Activated CD4-positive, alpha-beta memory T cell treated with anti-CD3 and anti-CD28 coated beads for 36 hours (primary cell): ENCODE measurements at regions of chr10 and their contacts with region 1.

Region 1: DNA sequence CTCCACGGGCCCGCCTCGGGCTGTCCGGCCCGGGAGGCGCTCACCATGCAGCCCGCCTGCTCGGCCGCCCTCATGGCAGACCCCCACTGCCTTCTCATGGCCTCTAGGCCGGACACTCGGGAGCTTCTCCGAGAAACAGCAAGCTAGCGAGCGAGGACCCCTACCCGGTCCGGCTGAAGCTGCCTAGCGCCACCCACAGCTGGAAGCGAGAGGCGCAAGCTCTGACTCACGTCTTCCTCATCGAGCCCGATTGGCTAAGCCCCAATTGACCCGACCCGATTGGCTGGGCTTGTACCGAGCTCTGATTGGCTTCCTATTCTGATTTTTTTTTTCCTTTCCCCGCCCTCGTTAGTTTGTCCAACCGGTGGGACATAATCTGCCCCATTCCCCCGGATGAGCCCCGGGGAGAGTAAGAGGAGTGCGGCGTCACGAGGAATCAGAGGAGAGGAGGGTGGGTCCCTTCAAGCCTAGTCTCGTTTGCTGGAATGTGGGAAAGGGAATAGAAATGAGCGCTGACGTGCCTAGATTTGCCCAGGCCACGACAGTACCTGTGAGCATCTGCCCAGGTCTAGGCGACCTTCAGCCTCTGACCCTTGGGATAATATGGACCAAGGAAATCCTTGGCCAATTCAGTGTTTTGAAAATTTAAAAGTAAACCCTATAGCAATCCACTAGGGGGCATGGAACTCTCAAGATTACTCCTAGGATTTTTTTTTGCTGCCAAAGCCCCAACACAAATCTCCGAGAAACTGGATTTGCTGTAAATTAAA is at the start of gene TYSND1:
- DNase-seq: peak; percentile 96
- H3K4me3 Mint-ChIP-seq: peak within 1 kb of the TSS; percentile 89
- H3K27ac Mint-ChIP-seq: peak within 1 kb of the TSS; percentile 90
- H3K4me1 Mint-ChIP-seq: peaks cover 21% of the 10 kb centered on the region
- H3K27me3 Mint-ChIP-seq: no peaks in the 10 kb centered on the region
- total RNA-seq, gene TYSND1: 10.9 to 12.1 TPM

Region 2: DNA sequence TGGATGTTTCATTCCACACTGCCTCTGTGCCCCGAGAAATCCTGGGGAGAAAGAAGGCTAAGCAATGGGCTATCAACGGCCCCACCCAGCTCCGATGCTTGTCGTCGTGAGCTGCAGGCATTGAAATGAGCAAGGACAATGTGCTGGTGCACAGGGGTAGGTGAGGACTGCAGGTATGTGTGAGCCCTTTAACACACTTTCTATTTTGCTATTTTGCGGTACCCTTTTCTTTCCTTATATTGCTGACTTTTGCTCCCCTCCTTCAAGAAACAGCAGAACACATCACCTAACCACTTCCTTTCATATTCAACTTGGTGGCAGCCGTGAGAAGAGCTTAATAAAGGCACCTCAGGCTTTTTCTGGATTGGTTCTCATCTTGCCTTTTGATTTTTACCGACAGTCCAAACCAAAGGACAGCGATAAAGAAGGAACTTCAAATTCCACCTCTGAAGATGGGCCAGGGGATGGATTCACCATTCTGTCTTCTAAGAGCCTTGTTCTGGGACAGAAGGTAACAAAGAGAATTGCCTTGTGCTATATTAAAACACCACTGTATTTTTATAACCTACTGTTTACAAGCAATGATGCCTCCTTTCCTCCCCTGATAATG is 53.2 kb before region 1 on chr10:
- CTCF ChIA-PET with region 1: interaction called, 30 read pairs
- POLR2A ChIA-PET with region 1: interaction called, 3 read pairs
- intact Hi-C with region 1: loop called (anchors 1 kb)
- DNase-seq: peak; percentile 51
- H3K4me3 Mint-ChIP-seq: peak overlapping the region; percentile 58
- H3K27ac Mint-ChIP-seq: peak overlapping the region; percentile 7
- H3K4me1 Mint-ChIP-seq: peaks cover 34% of the 10 kb centered on the region
- H3K27me3 Mint-ChIP-seq: no peaks in the 10 kb centered on the region

Region 3: DNA sequence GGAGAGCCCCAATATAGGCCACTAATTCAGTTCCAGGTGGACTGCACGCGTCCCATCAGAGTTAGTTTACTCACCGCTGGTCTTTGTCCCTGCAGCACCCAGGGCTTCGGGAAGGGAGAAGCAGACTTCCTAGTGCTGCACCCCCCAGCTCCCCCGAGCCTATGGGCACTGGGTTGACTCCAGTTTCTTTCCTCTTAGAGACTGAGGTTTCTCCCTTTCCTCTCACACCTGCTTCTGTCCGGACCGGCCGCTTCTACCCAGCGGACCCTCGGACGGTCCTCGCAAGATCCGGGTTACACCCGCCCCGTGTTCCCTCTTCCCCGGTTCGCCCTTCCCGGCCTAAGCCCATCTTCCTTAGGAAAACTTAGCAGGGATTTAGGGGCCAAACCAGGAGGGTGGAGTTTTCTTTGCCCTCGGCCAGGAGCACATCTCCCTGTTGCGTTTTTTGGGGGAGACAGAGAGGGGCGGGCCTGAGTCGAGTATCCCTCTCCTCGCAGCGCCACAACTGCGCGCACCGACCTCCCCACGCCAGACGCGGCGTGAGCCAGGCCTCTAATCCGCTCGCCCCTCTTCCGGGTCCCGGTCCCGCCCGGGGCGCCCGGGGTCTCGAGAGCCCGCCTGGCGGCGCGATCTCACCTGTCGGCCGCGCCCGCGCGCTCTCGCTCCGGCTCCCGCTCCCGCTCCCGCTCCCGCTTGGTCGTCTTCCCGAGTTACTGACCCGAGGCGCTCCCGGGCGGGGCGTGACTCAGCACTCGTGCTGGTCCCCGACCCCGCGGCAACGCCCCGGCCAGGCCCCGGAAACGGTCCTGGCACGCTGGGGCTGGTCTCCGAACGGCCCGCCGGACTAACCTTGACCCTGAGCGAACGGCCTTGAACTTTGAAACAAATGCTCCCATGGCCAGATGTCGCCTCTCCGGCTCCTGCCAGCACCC is 14.3 kb before region 1 on chr10 and contains the start of gene AIFM2:
- CTCF ChIA-PET with region 1: interaction called, 16 read pairs
- POLR2A ChIA-PET with region 1: interaction called, 6 read pairs
- intact Hi-C with region 1: no loop called
- DNase-seq: peak; percentile 54
- H3K4me3 Mint-ChIP-seq: peak within 1 kb of the TSS; percentile 77
- H3K27ac Mint-ChIP-seq: no peak within 1 kb of the TSS
- H3K4me1 Mint-ChIP-seq: peaks cover 17% of the 10 kb centered on the region
- H3K27me3 Mint-ChIP-seq: no peaks in the 10 kb centered on the region
- total RNA-seq, gene AIFM2: 5.3 to 7.1 TPM

Region 4: DNA sequence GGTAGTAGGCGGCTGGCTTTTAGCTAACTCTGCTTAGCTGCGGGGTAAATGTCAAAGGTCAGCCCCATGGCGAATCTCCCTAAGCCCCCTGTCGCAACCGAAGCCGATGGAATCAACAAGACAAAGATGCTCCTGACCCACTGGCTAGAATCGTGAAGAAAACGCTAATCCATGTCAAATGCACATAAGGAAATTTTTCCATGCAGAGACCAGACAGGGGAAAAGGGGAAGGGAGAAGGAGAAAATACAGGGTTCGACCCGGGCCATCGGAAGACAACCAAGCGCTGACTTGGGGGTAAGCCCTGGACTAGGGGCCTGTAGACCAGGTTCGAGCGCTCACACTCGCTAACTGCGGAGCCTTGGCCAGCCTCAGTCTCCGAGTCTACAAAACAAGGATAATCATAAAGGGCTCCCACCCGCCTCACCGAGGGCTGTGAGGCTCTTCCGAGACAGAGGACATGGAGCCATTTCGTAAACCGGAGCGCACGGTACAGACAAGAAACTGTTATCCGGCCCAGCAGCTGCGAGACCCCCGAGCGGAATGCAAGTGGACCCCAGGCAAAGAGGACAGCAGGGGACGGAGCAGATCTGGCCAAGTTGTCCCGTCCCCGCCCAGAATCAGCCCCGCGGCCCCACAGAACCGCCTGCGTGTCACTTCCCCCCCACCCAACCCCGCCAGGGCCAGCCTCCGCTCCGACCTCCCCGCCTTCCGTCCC is 23.1 kb after region 1 on chr10:
- CTCF ChIA-PET with region 1: interaction called, 55 read pairs
- POLR2A ChIA-PET with region 1: interaction called, 50 read pairs
- intact Hi-C with region 1: loop called (anchors 1 kb)
- DNase-seq: peak; percentile 15
- H3K4me3 Mint-ChIP-seq: peak overlapping the region; percentile 93
- H3K27ac Mint-ChIP-seq: peak overlapping the region; percentile 94
- H3K4me1 Mint-ChIP-seq: peaks cover 68% of the 10 kb centered on the region
- H3K27me3 Mint-ChIP-seq: no peaks in the 10 kb centered on the region

Region 5: GRCh38 chr10:70221030-70221429 is 74.4 kb after region 1 on chr10:
- CTCF ChIA-PET with region 1: interaction called, 20 read pairs
- POLR2A ChIA-PET with region 1: no interaction called
- intact Hi-C with region 1: no loop called
- DNase-seq: no peak
- H3K4me3 Mint-ChIP-seq: no peak overlapping the region
- H3K27ac Mint-ChIP-seq: no peak overlapping the region
- H3K4me1 Mint-ChIP-seq: peaks cover 37% of the 10 kb centered on the region
- H3K27me3 Mint-ChIP-seq: no peaks in the 10 kb centered on the region

Region 6: DNA sequence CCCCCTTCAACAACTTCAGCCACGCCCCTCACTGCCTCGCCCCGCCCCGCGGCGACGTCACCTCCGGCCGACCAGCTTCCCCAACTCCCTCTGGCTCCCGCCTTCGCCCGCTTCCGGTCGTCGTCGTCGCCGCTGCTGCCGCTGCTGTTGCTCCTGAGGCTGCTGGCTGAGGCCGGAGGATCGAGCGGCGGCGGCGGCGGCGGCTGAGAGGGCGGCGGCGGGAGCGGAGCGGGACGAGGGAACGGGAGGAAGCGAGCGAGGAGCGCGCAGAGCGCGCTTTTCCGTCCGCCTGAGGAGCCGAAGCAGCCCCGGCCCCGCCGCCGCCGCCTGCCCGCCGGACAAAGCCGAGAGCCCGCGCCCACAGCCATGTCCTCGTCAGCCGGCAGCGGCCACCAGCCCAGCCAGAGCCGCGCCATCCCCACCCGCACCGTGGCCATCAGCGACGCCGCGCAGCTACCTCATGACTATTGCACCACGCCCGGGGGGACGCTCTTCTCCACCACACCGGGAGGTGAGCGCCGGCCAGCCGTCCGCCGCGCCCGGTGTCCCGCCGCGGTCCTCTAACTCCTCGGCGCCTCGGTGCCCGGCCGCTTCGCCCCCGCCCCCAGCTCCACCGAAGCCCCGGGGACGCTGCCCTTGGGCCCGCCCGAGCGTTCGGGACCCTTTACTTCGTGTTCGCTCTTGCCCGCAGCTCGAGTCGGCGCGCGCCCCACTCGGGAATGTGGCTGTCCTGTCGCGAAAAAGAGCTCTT is 257.5 kb after region 1 on chr10 and contains the start of gene EIF4EBP2:
- CTCF ChIA-PET with region 1: interaction called, 10 read pairs
- POLR2A ChIA-PET with region 1: interaction called, 4 read pairs
- intact Hi-C with region 1: no loop called
- DNase-seq: peak; percentile 100
- H3K4me3 Mint-ChIP-seq: peak within 1 kb of the TSS; percentile 95
- H3K27ac Mint-ChIP-seq: peak within 1 kb of the TSS; percentile 91
- H3K4me1 Mint-ChIP-seq: peaks cover 37% of the 10 kb centered on the region
- H3K27me3 Mint-ChIP-seq: no peaks in the 10 kb centered on the region
- total RNA-seq, gene EIF4EBP2: 27.1 to 27.5 TPM